HEK293 (cell line): ENCODE measurements at regions of chr5 and their contacts with region 1.

Region 1: DNA sequence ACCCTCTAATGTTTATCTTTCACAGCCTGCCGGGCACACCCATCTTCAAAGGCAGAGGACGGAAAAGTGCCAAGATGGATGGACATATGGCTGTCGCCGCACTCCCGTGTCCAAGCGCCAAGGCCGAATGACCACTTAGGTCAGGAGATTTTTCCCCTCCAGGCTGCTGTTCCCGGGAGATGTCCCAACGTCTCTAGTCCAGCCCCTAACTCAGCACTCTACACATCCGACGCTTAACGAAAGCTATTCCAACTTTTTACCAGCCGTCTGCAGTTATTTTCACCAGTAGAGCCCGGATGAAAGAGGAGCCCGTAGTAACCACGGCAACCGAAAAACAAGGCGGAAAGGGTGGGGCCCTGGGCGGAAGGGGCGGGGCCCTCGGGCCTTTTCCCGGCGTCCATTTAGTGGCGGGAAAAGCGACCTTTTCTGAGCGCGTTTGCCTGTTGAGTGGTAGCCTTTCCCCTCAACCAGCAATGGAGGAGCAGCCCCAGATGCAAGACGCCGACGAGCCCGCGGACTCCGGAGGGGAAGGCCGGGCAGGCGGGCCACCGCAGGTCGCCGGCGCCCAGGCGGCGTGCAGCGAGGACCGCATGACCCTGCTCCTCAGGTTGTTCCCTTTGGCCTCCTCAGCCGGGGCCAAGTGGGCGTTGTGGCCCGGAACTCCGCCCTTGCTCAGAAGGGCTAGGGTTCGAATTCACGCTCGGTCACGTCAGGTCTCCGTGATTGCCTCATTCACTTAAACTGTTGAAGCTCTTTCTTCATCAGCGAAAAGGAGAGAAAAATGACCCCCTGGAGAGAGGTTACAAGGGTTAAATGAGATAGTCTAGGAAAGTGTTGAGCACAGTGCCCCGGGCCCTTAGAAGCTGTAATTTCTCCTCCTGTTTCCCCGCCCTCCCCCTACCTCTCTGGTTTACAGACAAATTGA is at the start of gene CENPH:
- H3K4me3 ChIP-seq: peak within 1 kb of the TSS; percentile 97
- H3K27ac ChIP-seq: peak within 1 kb of the TSS; percentile 89
- H3K4me1 ChIP-seq: no peaks in the 10 kb centered on the region
- CTCF ChIP-seq: no peak

Region 2: GRCh38 chr5:69042500-69042899 is 146.9 kb before region 1 on chr5:
- CTCF ChIA-PET with region 1: no interaction called
- POLR2A ChIA-PET with region 1: no interaction called
- H3K4me3 ChIP-seq: no peak overlapping the region
- H3K27ac ChIP-seq: no peak overlapping the region
- H3K4me1 ChIP-seq: no peaks in the 10 kb centered on the region
- CTCF ChIP-seq: no peak

Region 3: GRCh38 chr5:69166686-69167492 is 22.5 kb before region 1 on chr5 and contains the start of gene CCNB1:
- CTCF ChIA-PET with region 1: no interaction called
- POLR2A ChIA-PET with region 1: interaction called, 13 read pairs
- H3K4me3 ChIP-seq: peak within 1 kb of the TSS; percentile 99
- H3K27ac ChIP-seq: peak within 1 kb of the TSS; percentile 81
- H3K4me1 ChIP-seq: peaks cover 2% of the 10 kb centered on the region; the same call in 1 of the 2 replicates
- CTCF ChIP-seq: peak; percentile 11; the same call in 1 of the 2 replicates

Region 4: GRCh38 chr5:69202497-69202896 is 13.1 kb after region 1 on chr5:
- CTCF ChIA-PET with region 1: no interaction called
- POLR2A ChIA-PET with region 1: interaction called, 16 read pairs
- H3K4me3 ChIP-seq: no peak overlapping the region
- H3K27ac ChIP-seq: no peak overlapping the region
- H3K4me1 ChIP-seq: no peaks in the 10 kb centered on the region
- CTCF ChIP-seq: no peak

Region 5: GRCh38 chr5:69217548-69218526 is 28.4 kb after region 1 on chr5:
- CTCF ChIA-PET with region 1: no interaction called
- POLR2A ChIA-PET with region 1: interaction called, 11 read pairs
- H3K4me3 ChIP-seq: peak overlapping the region; percentile 94
- H3K27ac ChIP-seq: peak overlapping the region; percentile 86
- H3K4me1 ChIP-seq: no peaks in the 10 kb centered on the region
- CTCF ChIP-seq: peak; percentile 77